ENCODE measurements at regions of chr12 and their contacts with region 1.

Region 1: DNA sequence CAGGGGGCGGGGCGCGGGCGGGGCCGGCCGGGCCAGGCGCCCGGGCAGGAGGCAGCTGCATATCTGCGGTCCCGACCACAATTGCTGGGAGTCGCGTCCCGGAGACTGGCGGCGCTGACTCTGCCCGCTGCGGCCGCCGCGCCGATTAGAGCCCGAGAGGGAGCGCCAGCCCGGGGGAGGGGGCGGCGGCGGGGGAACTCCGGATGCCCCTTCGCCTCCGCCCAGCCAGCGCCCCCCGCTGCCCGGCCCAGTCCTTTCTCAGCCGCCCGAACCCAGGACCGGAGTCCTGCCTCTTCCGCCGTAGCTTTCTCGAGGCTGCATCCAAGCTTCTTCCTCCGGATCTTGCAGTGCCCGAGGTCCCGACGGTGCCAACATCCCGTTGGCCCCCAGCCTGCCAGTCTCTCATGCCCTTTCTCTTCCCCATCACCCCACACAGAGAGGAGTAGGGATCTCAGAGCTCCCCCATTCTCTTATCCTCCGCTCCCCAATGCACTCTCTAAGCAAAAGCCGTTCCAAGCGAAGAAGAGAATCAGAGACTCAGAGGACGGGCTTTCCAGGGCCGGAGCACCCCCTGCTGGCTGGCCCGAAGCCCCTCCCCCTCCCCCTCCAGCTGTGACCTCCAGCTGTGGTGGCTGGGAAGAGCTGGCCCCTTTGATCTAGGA is 8.8 kb upstream of the SP7 start:
- DNase-seq: peak; percentile 51 to 85 (median 65)
- ATAC-seq: peak; percentile 80
- H3K4me3 ChIP-seq: peak overlapping the region; percentile 66
- H3K4me3 Mint-ChIP-seq: peak overlapping the region; percentile 93
- H3K27ac ChIP-seq: no peak overlapping the region
- H3K27ac Mint-ChIP-seq: peak overlapping the region; percentile 72
- H3K4me1 ChIP-seq: peaks cover 15% of the 10 kb centered on the region
- H3K4me1 Mint-ChIP-seq: peaks cover 21% of the 10 kb centered on the region
- H3K27me3 ChIP-seq: peaks cover 2 to 3% of the 10 kb centered on the region in 2 experiments
- H3K27me3 Mint-ChIP-seq: peaks cover 3% of the 10 kb centered on the region
- CTCF ChIP-seq: peak; percentile 81

Region 2: DNA sequence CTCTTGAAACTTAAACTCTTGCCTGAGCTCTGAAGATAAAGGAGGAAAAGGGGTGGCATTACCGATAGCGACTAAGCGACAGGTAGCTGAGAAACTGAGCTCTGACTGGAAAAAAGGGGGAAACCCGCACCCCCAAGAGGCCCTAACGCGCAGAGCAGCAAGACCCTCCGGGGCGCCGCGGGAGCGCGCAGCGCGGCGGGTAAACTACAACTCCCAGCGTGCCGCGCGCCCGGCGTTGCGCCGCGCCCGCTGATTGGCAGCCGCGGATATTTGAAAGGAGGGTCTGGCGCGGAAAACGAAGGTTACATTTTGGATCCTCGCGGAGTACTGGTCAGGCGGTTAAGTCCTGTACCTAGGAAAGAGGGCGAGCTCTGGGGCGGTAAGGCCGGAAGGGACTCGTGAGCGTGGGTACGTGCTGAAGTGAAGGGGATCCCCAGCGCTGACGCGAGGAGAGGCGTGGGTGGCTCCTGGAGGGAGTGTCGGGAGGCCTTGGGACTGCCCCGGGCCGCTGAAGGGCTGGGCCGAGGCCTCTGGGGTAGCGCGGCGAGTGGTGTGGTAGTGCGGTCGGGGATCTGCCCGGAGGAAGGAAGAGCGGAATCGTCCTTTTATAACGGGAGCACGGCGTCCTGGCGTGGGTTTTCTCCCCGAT is 76.8 kb before region 1 on chr12 and contains the start of gene ESPL1:
- CTCF ChIA-PET with region 1: interaction called, 12 read pairs
- POLR2A ChIA-PET with region 1: interaction called, 3 read pairs
- intact Hi-C with region 1: no loop called
- DNase-seq: peak; percentile 55 to 93 (median 74)
- ATAC-seq: peak; percentile 91
- H3K4me3 ChIP-seq: peak within 1 kb of the TSS; percentile 86
- H3K4me3 Mint-ChIP-seq: peak within 1 kb of the TSS; percentile 95
- H3K27ac ChIP-seq: peak within 1 kb of the TSS; percentile 40 to 50
- H3K27ac Mint-ChIP-seq: peak within 1 kb of the TSS; percentile 82
- H3K4me1 ChIP-seq: peaks cover 18% of the 10 kb centered on the region
- H3K4me1 Mint-ChIP-seq: peaks cover 19% of the 10 kb centered on the region
- H3K27me3 ChIP-seq: no peaks in the 10 kb centered on the region
- H3K27me3 Mint-ChIP-seq: no peaks in the 10 kb centered on the region
- CTCF ChIP-seq: peak; percentile 36
- total RNA-seq, gene ESPL1: 0.20 to 0.71 TPM

Region 3: DNA sequence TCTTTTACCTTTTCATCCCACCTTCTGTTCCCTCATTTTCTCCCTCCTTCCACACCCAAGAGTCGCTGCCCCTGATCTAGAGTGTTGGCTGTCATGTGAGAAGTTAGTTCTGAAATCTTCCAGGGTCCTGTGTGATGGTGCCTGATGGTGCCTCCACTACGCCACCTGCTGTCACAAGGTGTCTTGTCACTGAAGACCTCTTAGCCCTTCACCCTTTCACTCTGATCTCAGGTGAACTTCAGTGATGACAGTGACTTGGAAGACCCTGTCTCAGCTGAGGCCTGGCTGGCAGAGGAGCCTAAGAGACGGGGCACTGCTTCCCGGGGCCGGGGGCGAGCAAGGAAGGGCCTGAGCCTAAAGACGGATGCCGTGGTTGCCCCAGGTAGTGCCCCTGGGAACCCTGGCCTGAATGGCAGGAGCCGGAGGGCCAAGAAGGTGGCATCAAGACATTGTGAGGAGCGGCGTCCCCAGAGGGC is 57.2 kb before region 1 on chr12:
- CTCF ChIA-PET with region 1: no interaction called
- POLR2A ChIA-PET with region 1: no interaction called
- intact Hi-C with region 1: loop called in 1 of 2 experiments (anchors 2 kb)
- DNase-seq: peak; percentile 60 to 88 (median 70)
- ATAC-seq: peak; percentile 98
- H3K4me3 ChIP-seq: no peak overlapping the region
- H3K4me3 Mint-ChIP-seq: no peak overlapping the region
- H3K27ac ChIP-seq: no peak overlapping the region
- H3K27ac Mint-ChIP-seq: peak overlapping the region; percentile 0
- H3K4me1 ChIP-seq: peaks cover 6% of the 10 kb centered on the region
- H3K4me1 Mint-ChIP-seq: peaks cover 5% of the 10 kb centered on the region
- H3K27me3 ChIP-seq: no peaks in the 10 kb centered on the region
- H3K27me3 Mint-ChIP-seq: no peaks in the 10 kb centered on the region
- CTCF ChIP-seq: peak; percentile 81

Region 4: DNA sequence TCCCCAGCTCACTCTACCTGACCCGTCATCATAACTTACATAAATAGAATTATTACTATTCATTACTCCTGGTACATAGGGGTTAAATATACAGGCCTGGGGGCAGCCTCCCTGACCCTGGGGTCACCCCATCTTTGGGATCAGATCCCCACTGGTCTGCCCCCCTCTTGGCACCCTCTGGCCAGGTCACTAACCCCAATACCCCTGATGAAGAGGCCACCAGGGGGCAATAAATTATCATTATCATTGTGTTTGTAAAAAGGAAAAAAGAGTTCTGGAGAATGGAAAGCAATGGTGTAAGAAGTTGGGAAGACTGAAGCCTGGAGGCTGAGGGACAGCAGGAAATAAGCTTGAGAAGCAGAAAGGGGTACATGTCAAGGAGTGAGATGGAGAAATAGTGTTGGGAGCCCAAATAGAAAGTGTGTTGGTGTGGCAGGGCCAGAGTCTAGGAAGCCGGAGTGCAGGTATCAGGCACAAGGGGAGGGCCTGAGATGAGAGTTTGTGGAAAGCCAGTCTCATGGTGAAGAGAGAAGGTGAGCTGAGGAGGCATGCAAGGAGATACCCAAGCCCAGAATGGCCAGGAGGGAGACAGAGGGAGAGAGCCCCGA is 17.4 kb before region 1 on chr12:
- CTCF ChIA-PET with region 1: interaction called, 51 read pairs
- POLR2A ChIA-PET with region 1: interaction called, 87 read pairs
- intact Hi-C with region 1: loop called (anchors 1 kb)
- DNase-seq: peak in 1 of 14 experiments; percentile 25
- ATAC-seq: no peak
- H3K4me3 ChIP-seq: no peak overlapping the region
- H3K4me3 Mint-ChIP-seq: peak overlapping the region; percentile 63
- H3K27ac ChIP-seq: no peak overlapping the region
- H3K27ac Mint-ChIP-seq: no peak overlapping the region
- H3K4me1 ChIP-seq: peaks cover 33% of the 10 kb centered on the region
- H3K4me1 Mint-ChIP-seq: peaks cover 18% of the 10 kb centered on the region
- H3K27me3 ChIP-seq: peaks cover 0 to 2% of the 10 kb centered on the region in 2 experiments
- H3K27me3 Mint-ChIP-seq: no peaks in the 10 kb centered on the region
- CTCF ChIP-seq: peak; percentile 38

Region 5: DNA sequence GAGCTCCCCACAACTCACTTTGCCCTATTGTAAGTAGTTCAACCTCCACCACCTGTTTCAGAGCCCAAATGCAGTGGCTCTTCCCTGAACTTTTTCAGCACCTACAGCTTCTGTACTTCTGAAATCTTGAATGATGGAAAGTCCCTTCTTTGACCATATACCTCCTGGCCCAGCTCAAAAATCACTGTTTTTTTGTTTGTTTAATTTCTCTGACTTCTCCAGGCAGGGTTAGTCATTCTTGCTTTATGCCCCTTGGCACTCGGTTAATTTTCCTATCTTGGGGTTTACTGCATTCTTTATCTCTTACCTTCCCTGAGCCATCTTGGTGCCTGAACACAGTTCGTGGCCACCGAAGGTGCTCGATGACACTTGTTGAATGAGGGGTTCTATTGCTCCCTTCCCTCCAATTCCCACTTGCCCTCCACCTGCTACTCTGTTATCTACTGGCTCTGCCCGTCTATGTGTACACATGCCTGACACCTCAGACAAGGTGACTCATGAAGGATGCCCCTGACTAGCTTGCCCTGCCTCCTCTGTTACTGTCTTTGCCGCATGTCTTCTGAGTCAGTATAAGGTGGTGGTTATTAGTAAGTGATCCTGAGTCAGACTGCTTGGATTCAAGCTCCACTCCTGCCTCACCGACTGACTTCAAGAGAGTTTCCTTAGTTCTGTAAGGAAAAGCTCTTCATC is 83.1 kb after region 1 on chr12:
- CTCF ChIA-PET with region 1: interaction called, 16 read pairs
- POLR2A ChIA-PET with region 1: no interaction called
- intact Hi-C with region 1: no loop called
- DNase-seq: peak in 1 of 14 experiments; percentile 13
- ATAC-seq: no peak
- H3K4me3 ChIP-seq: no peak overlapping the region
- H3K4me3 Mint-ChIP-seq: no peak overlapping the region
- H3K27ac ChIP-seq: no peak overlapping the region
- H3K27ac Mint-ChIP-seq: no peak overlapping the region
- H3K4me1 ChIP-seq: no peaks in the 10 kb centered on the region
- H3K4me1 Mint-ChIP-seq: no peaks in the 10 kb centered on the region
- H3K27me3 ChIP-seq: no peaks in the 10 kb centered on the region
- H3K27me3 Mint-ChIP-seq: no peaks in the 10 kb centered on the region
- CTCF ChIP-seq: no peak

Measured in CD4-positive, alpha-beta T cell (primary cell).